Uterus (tissue), 4 donors: ENCODE measurements at regions of chr4 and their contacts with region 1.

Region 1: GRCh38 chr4:48830706-48831531 is at the start of gene OCIAD1:
- DNase-seq: peak; percentile 95 to 99
- H3K4me3 ChIP-seq: peak within 1 kb of the TSS; percentile 82 to 99
- H3K27ac ChIP-seq: peak within 1 kb of the TSS; percentile 89 to 97
- H3K4me1 ChIP-seq: no peaks in the 10 kb centered on the region
- H3K27me3 ChIP-seq: no peaks in the 10 kb centered on the region
- CTCF ChIP-seq: no peak
- POLR2A ChIP-seq: peak; percentile 37 to 50
- total RNA-seq, gene OCIAD1: 127 to 683 (median 166) TPM

Region 2: GRCh38 chr4:48779998-48780742 is 50.7 kb before region 1 on chr4 and contains the start of gene FRYL:
- intact Hi-C with region 1: loop called (anchors 2 kb)
- DNase-seq: peak; percentile 99 to 100
- H3K4me3 ChIP-seq: peak within 1 kb of the TSS; percentile 82 to 91
- H3K27ac ChIP-seq: peak within 1 kb of the TSS; percentile 92 to 97
- H3K4me1 ChIP-seq: peaks cover 0 to 12% of the 10 kb centered on the region in 2 donors
- H3K27me3 ChIP-seq: no peaks in the 10 kb centered on the region
- CTCF ChIP-seq: no peak
- POLR2A ChIP-seq: peak; percentile 49 to 80
- total RNA-seq, gene FRYL: 62.5 to 119 (median 98.8) TPM